ENCODE measurements at regions of chr3 and their contacts with region 1.

Region 1: GRCh38 chr3:194671900-194672808 is at the start of gene LSG1:
- DNase-seq: peak; percentile 97
- ATAC-seq: peak; percentile 96
- H3K4me3 ChIP-seq: peak within 1 kb of the TSS; percentile 67 to 99 (median 85)
- H3K4me3 Mint-ChIP-seq: peak within 1 kb of the TSS; percentile 99
- H3K27ac ChIP-seq: peak within 1 kb of the TSS; percentile 92 to 96
- H3K27ac Mint-ChIP-seq: peak within 1 kb of the TSS; percentile 99
- H3K4me1 ChIP-seq: peaks cover 13 to 15% of the 10 kb centered on the region in 2 donors
- H3K4me1 Mint-ChIP-seq: peaks cover 25% of the 10 kb centered on the region
- H3K27me3 ChIP-seq: no peaks in the 10 kb centered on the region
- H3K27me3 Mint-ChIP-seq: peaks cover 7% of the 10 kb centered on the region
- CTCF ChIP-seq: no peak
- total RNA-seq, gene LSG1: 49.8 and 54.6 TPM in 2 replicates

Region 2: GRCh38 chr3:194769020-194769643 is 97.0 kb after region 1 on chr3:
- CTCF ChIA-PET with region 1: no interaction called
- POLR2A ChIA-PET with region 1: interaction called, 9 read pairs
- intact Hi-C with region 1: loop called (anchors 1 kb)
- DNase-seq: peak; percentile 97
- ATAC-seq: peak; percentile 97
- H3K4me3 ChIP-seq: peak overlapping the region; percentile 40 to 75 (median 55)
- H3K4me3 Mint-ChIP-seq: peak overlapping the region; percentile 85
- H3K27ac ChIP-seq: peak overlapping the region; percentile 52 to 77
- H3K27ac Mint-ChIP-seq: peak overlapping the region; percentile 83
- H3K4me1 ChIP-seq: peaks cover 19 to 29% of the 10 kb centered on the region in 2 donors
- H3K4me1 Mint-ChIP-seq: peaks cover 29% of the 10 kb centered on the region
- H3K27me3 ChIP-seq: peaks cover 0 to 2% (median 0%) of the 10 kb centered on the region in 4 experiments
- H3K27me3 Mint-ChIP-seq: peaks cover 14% of the 10 kb centered on the region
- CTCF ChIP-seq: no peak

Region 3: GRCh38 chr3:195106418-195106906 is 434.3 kb after region 1 on chr3:
- CTCF ChIA-PET with region 1: interaction called, 61 read pairs
- POLR2A ChIA-PET with region 1: interaction called, 4 read pairs
- intact Hi-C with region 1: loop called (anchors 1 kb)
- DNase-seq: peak; percentile 85
- ATAC-seq: peak; percentile 98
- H3K4me3 ChIP-seq: peak overlapping the region in 3 of 5 experiments; percentile 13 to 40 (median 21)
- H3K4me3 Mint-ChIP-seq: peak overlapping the region; percentile 80
- H3K27ac ChIP-seq: no peak overlapping the region
- H3K27ac Mint-ChIP-seq: peak overlapping the region; percentile 79
- H3K4me1 ChIP-seq: peaks cover 15 to 24% of the 10 kb centered on the region in 2 donors
- H3K4me1 Mint-ChIP-seq: peaks cover 34% of the 10 kb centered on the region
- H3K27me3 ChIP-seq: no peaks in the 10 kb centered on the region
- H3K27me3 Mint-ChIP-seq: no peaks in the 10 kb centered on the region
- CTCF ChIP-seq: peak; percentile 97

Region 4: DNA sequence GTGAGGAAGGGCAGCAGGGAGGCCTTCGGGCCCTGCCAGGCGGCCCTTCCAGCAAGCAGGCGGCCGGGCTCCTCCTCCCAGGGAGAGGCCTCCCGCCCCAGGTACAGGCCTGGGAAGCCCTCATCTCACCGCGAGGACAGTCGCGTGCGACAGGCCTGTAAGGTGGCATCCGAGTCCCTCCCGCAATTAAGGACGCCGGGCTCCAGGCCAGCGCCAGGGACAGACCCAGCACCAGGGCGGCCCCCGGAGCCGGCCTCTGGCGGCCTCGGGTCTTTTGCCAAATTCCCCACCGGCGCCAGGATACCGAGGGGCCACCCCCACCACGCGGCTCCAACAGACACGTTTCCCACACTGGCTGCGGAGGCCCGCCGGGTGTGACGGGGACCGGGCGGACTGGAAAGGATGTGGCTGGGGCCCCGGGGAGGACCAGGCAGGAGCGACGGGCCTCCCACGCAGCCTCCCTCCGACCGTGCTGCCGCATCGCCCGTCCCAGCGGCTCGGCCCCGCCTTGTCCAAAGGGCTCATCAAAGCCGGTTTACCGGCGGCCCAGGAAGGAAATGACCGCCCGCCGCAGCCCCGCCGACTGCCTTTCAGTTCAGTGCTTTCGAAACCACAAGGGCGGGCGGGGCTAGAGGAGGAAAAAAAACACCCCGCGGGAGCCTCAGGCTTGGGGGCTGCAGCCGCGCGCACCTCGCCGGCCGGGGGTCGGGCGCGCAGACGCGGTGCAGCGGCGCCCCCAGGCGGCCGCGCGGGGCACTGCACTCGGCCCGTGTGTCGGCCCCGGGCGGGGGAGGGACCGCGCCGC is 587.5 kb after region 1 on chr3:
- CTCF ChIA-PET with region 1: interaction called, 37 read pairs
- POLR2A ChIA-PET with region 1: interaction called, 8 read pairs
- intact Hi-C with region 1: loop called (anchors 1 kb)
- DNase-seq: peak; percentile 95
- ATAC-seq: peak; percentile 90
- H3K4me3 ChIP-seq: peak overlapping the region in 4 of 5 experiments; percentile 63 to 89 (median 72)
- H3K4me3 Mint-ChIP-seq: peak overlapping the region; percentile 74
- H3K27ac ChIP-seq: peak overlapping the region; percentile 78 to 87
- H3K27ac Mint-ChIP-seq: peak overlapping the region; percentile 92
- H3K4me1 ChIP-seq: peaks cover 16 to 23% of the 10 kb centered on the region in 2 donors
- H3K4me1 Mint-ChIP-seq: peaks cover 19% of the 10 kb centered on the region
- H3K27me3 ChIP-seq: no peaks in the 10 kb centered on the region
- H3K27me3 Mint-ChIP-seq: no peaks in the 10 kb centered on the region
- CTCF ChIP-seq: peak; percentile 73

Region 5: DNA sequence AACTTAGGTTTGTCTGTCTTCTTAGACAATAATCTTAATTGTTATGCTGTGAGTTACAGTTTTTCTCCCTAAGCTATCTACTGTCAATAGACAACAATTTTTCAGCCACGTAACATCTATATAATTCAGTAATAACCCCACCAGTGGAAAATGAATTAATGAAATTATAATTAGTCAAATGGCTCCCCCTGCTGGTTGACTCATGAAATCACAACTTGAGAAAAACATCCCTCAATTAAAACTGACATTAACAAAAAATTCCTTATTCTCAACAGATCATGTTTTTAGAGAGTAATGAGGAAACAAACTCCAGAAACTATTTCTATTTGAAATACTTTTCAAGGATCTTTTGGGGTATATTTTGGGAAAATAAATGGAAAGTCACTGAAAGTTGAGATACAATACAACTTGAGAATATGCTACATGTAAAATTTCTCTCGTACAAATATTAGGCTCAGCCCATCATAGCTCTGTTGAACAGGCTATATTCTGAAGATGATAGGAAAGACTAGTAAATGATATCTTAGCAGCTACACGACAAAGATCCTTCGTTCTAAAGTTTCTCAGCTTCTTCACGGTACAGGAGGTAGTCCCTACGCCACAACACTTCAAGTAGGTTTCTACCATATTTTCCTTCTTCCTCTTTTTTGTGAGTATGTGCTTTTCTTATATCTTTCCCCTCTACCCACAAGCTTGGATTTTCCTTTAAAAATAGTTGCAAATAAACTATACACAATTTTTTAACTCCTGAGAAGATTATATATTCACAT is 850.3 kb after region 1 on chr3:
- CTCF ChIA-PET with region 1: interaction called, 13 read pairs
- POLR2A ChIA-PET with region 1: no interaction called
- intact Hi-C with region 1: no loop called
- DNase-seq: peak; percentile 63
- ATAC-seq: peak; percentile 33
- H3K4me3 ChIP-seq: no peak overlapping the region
- H3K4me3 Mint-ChIP-seq: no peak overlapping the region
- H3K27ac ChIP-seq: peak overlapping the region in 1 of 2 donors; percentile 34
- H3K27ac Mint-ChIP-seq: peak overlapping the region; percentile 42
- H3K4me1 ChIP-seq: peaks cover 4 to 7% of the 10 kb centered on the region in 2 donors
- H3K4me1 Mint-ChIP-seq: peaks cover 18% of the 10 kb centered on the region
- H3K27me3 ChIP-seq: no peaks in the 10 kb centered on the region
- H3K27me3 Mint-ChIP-seq: no peaks in the 10 kb centered on the region
- CTCF ChIP-seq: peak; percentile 96

Measured in B cell (primary cell).